ENCODE measurements at regions of chr12 and their contacts with region 1.

Region 1: DNA sequence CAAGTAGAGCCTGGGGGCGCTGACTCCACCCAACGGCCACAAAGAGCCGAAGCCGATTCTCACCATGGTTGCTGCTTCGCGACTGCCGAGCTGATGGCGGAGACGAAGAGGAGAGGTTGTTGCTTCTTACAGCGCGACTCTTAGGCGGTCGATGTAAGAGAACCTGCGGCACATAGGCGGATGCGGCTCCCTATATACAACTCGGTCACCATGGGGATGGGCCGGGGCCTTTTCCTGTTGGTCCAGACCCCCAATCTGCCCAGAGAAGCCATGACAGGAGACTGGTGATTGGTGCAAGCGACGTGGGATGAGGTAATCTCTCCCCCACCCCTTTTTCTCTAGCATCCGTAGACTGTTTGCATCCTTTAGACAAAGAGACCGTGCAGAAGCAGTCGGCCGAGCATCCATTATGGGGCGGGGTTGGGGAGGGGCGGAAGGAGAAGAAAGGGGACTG is at the start of gene TUBA1A:
- DNase-seq: peak; percentile 90 to 99 (median 96)
- ATAC-seq: peak; percentile 85
- H3K4me3 ChIP-seq: peak within 1 kb of the TSS; percentile 90 to 98
- H3K4me3 Mint-ChIP-seq: peak within 1 kb of the TSS; percentile 97
- H3K27ac ChIP-seq: peak within 1 kb of the TSS; percentile 100
- H3K27ac Mint-ChIP-seq: peak within 1 kb of the TSS; percentile 100
- H3K4me1 ChIP-seq: peaks cover 14% of the 10 kb centered on the region
- H3K4me1 Mint-ChIP-seq: peaks cover 14% of the 10 kb centered on the region
- H3K27me3 ChIP-seq: no peaks in the 10 kb centered on the region
- H3K27me3 Mint-ChIP-seq: no peaks in the 10 kb centered on the region
- CTCF ChIP-seq: no peak
- total RNA-seq, gene TUBA1A: 209 to 225 TPM

Region 2: DNA sequence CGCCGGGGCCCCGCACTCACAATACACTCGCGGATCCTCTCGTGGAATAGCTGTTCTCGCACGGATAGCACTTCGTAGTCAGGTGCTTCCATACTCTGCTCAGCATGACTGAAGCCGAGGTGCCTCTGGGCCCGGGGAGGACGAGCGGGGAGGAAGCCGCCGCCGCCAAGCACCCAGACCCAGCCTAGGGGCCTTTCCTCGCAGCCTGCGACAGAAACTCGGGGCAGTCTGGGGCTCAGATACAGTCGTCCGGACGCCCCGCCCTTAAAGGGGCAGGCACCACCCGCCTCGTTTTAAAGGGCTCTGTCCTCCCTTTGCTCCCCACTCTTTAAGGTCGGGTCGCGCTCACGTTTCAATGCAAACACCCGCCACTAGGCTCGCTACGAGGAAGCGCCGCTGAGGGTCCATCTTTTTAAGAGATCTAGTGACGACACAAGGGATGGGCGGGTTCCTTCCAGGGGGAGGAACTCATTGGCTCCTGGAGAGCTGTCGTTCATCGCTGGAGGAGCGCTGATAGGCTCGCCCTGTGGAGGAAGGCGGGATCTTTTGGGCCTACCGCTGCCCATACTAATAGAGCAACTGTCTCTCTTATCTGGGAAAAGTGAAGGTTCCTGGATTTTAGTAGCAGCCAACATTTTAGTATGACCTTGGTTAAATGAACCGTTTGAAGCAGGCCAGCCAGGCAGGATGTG is 78.3 kb before region 1 on chr12 and contains the start of gene LMBR1L:
- CTCF ChIA-PET with region 1: no interaction called
- POLR2A ChIA-PET with region 1: interaction called, 26 read pairs
- intact Hi-C with region 1: loop called (anchors 1 kb)
- DNase-seq: peak; percentile 93 to 99 (median 96)
- ATAC-seq: peak; percentile 90
- H3K4me3 ChIP-seq: peak within 1 kb of the TSS; percentile 82 to 92
- H3K4me3 Mint-ChIP-seq: peak within 1 kb of the TSS; percentile 98
- H3K27ac ChIP-seq: peak within 1 kb of the TSS; percentile 92 to 97
- H3K27ac Mint-ChIP-seq: peak within 1 kb of the TSS; percentile 98
- H3K4me1 ChIP-seq: peaks cover 18% of the 10 kb centered on the region
- H3K4me1 Mint-ChIP-seq: peaks cover 44% of the 10 kb centered on the region
- H3K27me3 ChIP-seq: no peaks in the 10 kb centered on the region
- H3K27me3 Mint-ChIP-seq: no peaks in the 10 kb centered on the region
- CTCF ChIP-seq: peak; percentile 53
- total RNA-seq, gene LMBR1L: 464 to 497 TPM

Region 3: GRCh38 chr12:49200919-49201594 is 12.1 kb after region 1 on chr12:
- CTCF ChIA-PET with region 1: no interaction called
- POLR2A ChIA-PET with region 1: interaction called, 10 read pairs
- intact Hi-C with region 1: loop called in 1 of 2 experiments (anchors 1 kb)
- DNase-seq: peak in 2 of 9 experiments; percentile 68 to 82
- ATAC-seq: peak; percentile 92
- H3K4me3 ChIP-seq: no peak overlapping the region
- H3K4me3 Mint-ChIP-seq: no peak overlapping the region
- H3K27ac ChIP-seq: no peak overlapping the region
- H3K27ac Mint-ChIP-seq: peak overlapping the region; percentile 0
- H3K4me1 ChIP-seq: peaks cover 11% of the 10 kb centered on the region
- H3K4me1 Mint-ChIP-seq: peaks cover 13% of the 10 kb centered on the region
- H3K27me3 ChIP-seq: no peaks in the 10 kb centered on the region
- H3K27me3 Mint-ChIP-seq: peaks cover 2% of the 10 kb centered on the region
- CTCF ChIP-seq: no peak

Region 4: GRCh38 chr12:49232940-49233841 is 44.2 kb after region 1 on chr12:
- CTCF ChIA-PET with region 1: interaction called, 5 read pairs
- POLR2A ChIA-PET with region 1: interaction called, 18 read pairs
- intact Hi-C with region 1: loop called (anchors 1 to 2 kb)
- DNase-seq: peak in 1 of 9 experiments; percentile 13
- ATAC-seq: no peak
- H3K4me3 ChIP-seq: no peak overlapping the region
- H3K4me3 Mint-ChIP-seq: peak overlapping the region; percentile 69
- H3K27ac ChIP-seq: no peak overlapping the region
- H3K27ac Mint-ChIP-seq: no peak overlapping the region
- H3K4me1 ChIP-seq: peaks cover 8% of the 10 kb centered on the region
- H3K4me1 Mint-ChIP-seq: peaks cover 10% of the 10 kb centered on the region
- H3K27me3 ChIP-seq: no peaks in the 10 kb centered on the region
- H3K27me3 Mint-ChIP-seq: no peaks in the 10 kb centered on the region
- CTCF ChIP-seq: no peak

Region 5: GRCh38 chr12:49264738-49265515 is 76.0 kb after region 1 on chr12 and contains the start of gene TUBA1C:
- CTCF ChIA-PET with region 1: no interaction called
- POLR2A ChIA-PET with region 1: interaction called, 6 read pairs
- intact Hi-C with region 1: loop called (anchors 1 kb)
- DNase-seq: peak; percentile 65 to 91 (median 84)
- ATAC-seq: peak; percentile 87
- H3K4me3 ChIP-seq: peak within 1 kb of the TSS; percentile 89 to 92
- H3K4me3 Mint-ChIP-seq: peak within 1 kb of the TSS; percentile 92
- H3K27ac ChIP-seq: peak within 1 kb of the TSS; percentile 75 to 84
- H3K27ac Mint-ChIP-seq: peak within 1 kb of the TSS; percentile 90
- H3K4me1 ChIP-seq: peaks cover 10% of the 10 kb centered on the region
- H3K4me1 Mint-ChIP-seq: peaks cover 25% of the 10 kb centered on the region
- H3K27me3 ChIP-seq: no peaks in the 10 kb centered on the region
- H3K27me3 Mint-ChIP-seq: no peaks in the 10 kb centered on the region
- CTCF ChIP-seq: no peak
- total RNA-seq, gene TUBA1C: 25.5 to 30.7 TPM

Region 6: GRCh38 chr12:49296034-49296835 is 107.3 kb after region 1 on chr12:
- CTCF ChIA-PET with region 1: no interaction called
- POLR2A ChIA-PET with region 1: no interaction called
- intact Hi-C with region 1: no loop called
- DNase-seq: peak; percentile 30 to 76 (median 66)
- ATAC-seq: peak; percentile 84
- H3K4me3 ChIP-seq: peak overlapping the region in 1 of 2 experiments; percentile 46
- H3K4me3 Mint-ChIP-seq: peak overlapping the region; percentile 60
- H3K27ac ChIP-seq: no peak overlapping the region
- H3K27ac Mint-ChIP-seq: no peak overlapping the region
- H3K4me1 ChIP-seq: peaks cover 13% of the 10 kb centered on the region
- H3K4me1 Mint-ChIP-seq: peaks cover 19% of the 10 kb centered on the region
- H3K27me3 ChIP-seq: peaks cover 34 to 36% of the 10 kb centered on the region in 2 experiments
- H3K27me3 Mint-ChIP-seq: peaks cover 45% of the 10 kb centered on the region
- CTCF ChIP-seq: peak; percentile 80